H1 (cell line): ENCODE measurements at regions of chr12 and their contacts with region 1.

Region 1: GRCh38 chr12:4526923-4527546 is 11.7 kb upstream of the RAD51AP1 start:
- DNase-seq: no peak
- H3K4me3 ChIP-seq: no peak overlapping the region
- H3K27ac ChIP-seq: no peak overlapping the region
- H3K4me1 ChIP-seq: no peaks in the 10 kb centered on the region
- H3K27me3 ChIP-seq: no peaks in the 10 kb centered on the region
- CTCF ChIP-seq: peak in 2 of 3 experiments; percentile 1 to 9; a peak in 2 of 4 replicates
- EP300 ChIP-seq: no peak
- POLR2A ChIP-seq: no peak
- RAD21 ChIP-seq: peak; percentile 23 to 44

Region 2: DNA sequence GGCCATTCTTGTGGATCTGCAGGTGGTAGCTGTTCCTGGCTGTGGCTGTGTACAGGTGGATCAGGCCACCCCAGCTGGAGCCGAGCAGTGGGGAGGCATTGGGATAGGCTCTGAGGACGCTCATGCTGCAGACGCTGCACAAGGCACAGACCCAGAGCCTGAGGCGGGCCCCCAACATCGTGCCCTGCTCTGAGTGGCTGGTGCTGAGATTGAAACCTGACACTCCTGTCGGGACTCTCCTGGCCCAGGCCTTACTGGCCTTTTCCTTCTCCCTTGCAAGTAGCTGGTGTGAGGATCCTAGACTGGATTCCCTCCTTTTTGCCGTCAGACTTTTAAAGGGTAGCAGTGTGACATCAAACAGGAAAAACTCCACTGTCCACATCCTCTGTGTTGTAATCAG is 147.6 kb before region 1 on chr12 and contains the start of gene FGF23:
- CTCF ChIA-PET with region 1: interaction called, 26 read pairs
- POLR2A ChIA-PET with region 1: no interaction called
- DNase-seq: peak; percentile 19 to 75
- H3K4me3 ChIP-seq: peak within 1 kb of the TSS in 1 of 4 experiments; percentile 30; a peak in 1 of 8 replicates
- H3K27ac ChIP-seq: no peak within 1 kb of the TSS
- H3K4me1 ChIP-seq: peaks cover 0 to 6% (median 4%) of the 10 kb centered on the region in 4 experiments; a peak in 4 of 7 replicates
- H3K27me3 ChIP-seq: 0 out of 7 replicates have a peak, but pooled peaks cover 0 to 1% (median 0%) of the 10 kb centered on the region in 4 experiments
- CTCF ChIP-seq: no peak
- EP300 ChIP-seq: no peak
- POLR2A ChIP-seq: no peak
- RAD21 ChIP-seq: no peak
- total RNA-seq, gene FGF23: 0.42 and 0.67 TPM in 2 replicates

Region 3: GRCh38 chr12:4434706-4435425 is 92.2 kb before region 1 on chr12:
- CTCF ChIA-PET with region 1: interaction called, 11 read pairs
- POLR2A ChIA-PET with region 1: no interaction called
- DNase-seq: peak in 1 of 2 experiments; percentile 26
- H3K4me3 ChIP-seq: no peak overlapping the region
- H3K27ac ChIP-seq: no peak overlapping the region
- H3K4me1 ChIP-seq: peaks cover 0 to 8% (median 0%) of the 10 kb centered on the region in 4 experiments; a peak in 1 of 7 replicates
- H3K27me3 ChIP-seq: no peaks in the 10 kb centered on the region; a peak in 1 of 7 replicates
- CTCF ChIP-seq: no peak
- EP300 ChIP-seq: no peak
- POLR2A ChIP-seq: no peak
- RAD21 ChIP-seq: no peak

Region 4: GRCh38 chr12:4545195-4545594 is 18.2 kb after region 1 on chr12:
- CTCF ChIA-PET with region 1: no interaction called
- POLR2A ChIA-PET with region 1: no interaction called
- DNase-seq: no peak
- H3K4me3 ChIP-seq: no peak overlapping the region
- H3K27ac ChIP-seq: no peak overlapping the region
- H3K4me1 ChIP-seq: 0 out of 7 replicates have a peak, but pooled peaks cover 0 to 3% (median 0%) of the 10 kb centered on the region in 4 experiments
- H3K27me3 ChIP-seq: no peaks in the 10 kb centered on the region
- CTCF ChIP-seq: no peak
- EP300 ChIP-seq: no peak
- POLR2A ChIP-seq: no peak
- RAD21 ChIP-seq: no peak